Common myeloid progenitor, CD34-positive (primary cell): ENCODE measurements at regions of chr20 and their contacts with region 1.

Region 1: DNA sequence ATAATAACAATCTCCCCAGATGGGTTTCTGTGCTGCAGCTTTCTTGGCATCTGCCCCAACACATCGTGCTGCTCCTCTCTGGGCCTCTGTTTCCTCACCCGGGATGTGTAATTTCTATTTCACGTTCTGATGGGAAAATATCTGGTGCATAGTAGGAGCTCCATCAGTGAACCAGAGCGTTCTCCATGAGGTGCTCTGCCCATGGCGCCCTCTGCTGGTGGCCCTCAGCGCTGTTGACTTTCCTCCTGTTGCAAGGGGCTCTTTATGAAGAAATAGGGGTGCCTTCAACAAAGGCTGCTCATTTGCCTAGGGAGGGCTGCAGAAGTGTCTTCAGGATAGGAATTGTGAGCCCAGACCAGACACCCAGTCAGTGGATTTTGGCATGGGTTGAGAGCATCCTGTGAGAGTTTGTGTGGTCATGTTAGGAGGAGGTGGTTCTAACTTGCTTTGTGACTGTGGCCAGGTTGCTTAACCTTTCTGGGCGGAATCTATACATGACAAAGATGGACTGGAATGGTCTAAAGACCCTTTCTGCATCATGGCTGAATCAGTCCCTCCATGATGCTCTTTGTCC is 8.1 kb downstream of the SCRT2 start:
- DNase-seq: peak; percentile 55 to 72 (median 64)
- H3K4me3 ChIP-seq: no peak overlapping the region
- H3K27ac ChIP-seq: no peak overlapping the region
- H3K4me1 ChIP-seq: peaks cover 0 to 32% (median 26%) of the 10 kb centered on the region in 4 experiments
- H3K27me3 ChIP-seq: peaks cover 0 to 49% (median 14%) of the 10 kb centered on the region in 5 experiments

Region 2: GRCh38 chr20:561437-562231 is 105.8 kb before region 1 on chr20:
- CTCF ChIA-PET with region 1: interaction called, 15 read pairs
- POLR2A ChIA-PET with region 1: no interaction called
- DNase-seq: peak; percentile 71 to 86 (median 79)
- H3K4me3 ChIP-seq: no peak overlapping the region
- H3K27ac ChIP-seq: no peak overlapping the region
- H3K4me1 ChIP-seq: no peaks in the 10 kb centered on the region
- H3K27me3 ChIP-seq: peaks cover 0 to 2% (median 0%) of the 10 kb centered on the region in 5 experiments

Region 3: DNA sequence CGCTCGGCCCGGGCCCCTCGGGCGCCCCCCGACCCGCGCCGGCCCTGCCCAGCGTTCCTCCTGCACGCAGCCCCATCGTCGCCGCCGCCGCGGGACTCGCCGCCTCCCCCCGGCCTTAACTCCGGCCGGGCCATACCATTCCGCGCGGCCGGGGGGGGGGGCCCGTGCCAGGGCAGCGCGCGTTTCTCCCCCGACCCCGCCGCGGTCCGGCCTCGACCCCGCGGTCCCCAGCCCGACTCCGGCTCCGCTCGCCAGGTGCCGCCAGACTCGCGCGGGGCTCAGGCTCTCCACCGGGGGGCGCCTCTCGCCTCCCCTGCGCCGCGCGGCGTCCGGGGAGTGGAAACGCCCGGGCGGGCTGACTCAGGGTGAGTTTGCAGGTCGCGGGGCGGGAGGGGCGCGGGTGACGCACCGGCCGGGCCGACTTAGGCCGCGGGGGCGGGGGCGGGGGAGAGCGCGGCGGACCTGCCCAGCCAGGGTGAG is 14.3 kb before region 1 on chr20 and contains the start of gene SRXN1:
- CTCF ChIA-PET with region 1: interaction called, 146 read pairs
- POLR2A ChIA-PET with region 1: no interaction called
- DNase-seq: peak; percentile 93 to 97 (median 95)
- H3K4me3 ChIP-seq: peak within 1 kb of the TSS; percentile 43 to 76 (median 64)
- H3K27ac ChIP-seq: peak within 1 kb of the TSS in 1 of 2 experiments; percentile 66
- H3K4me1 ChIP-seq: peaks cover 9 to 27% (median 23%) of the 10 kb centered on the region in 4 experiments
- H3K27me3 ChIP-seq: no peaks in the 10 kb centered on the region

Region 4: GRCh38 chr20:707442-708110 is 40.1 kb after region 1 on chr20:
- CTCF ChIA-PET with region 1: interaction called, 11 read pairs
- POLR2A ChIA-PET with region 1: no interaction called
- DNase-seq: no peak
- H3K4me3 ChIP-seq: no peak overlapping the region
- H3K27ac ChIP-seq: no peak overlapping the region
- H3K4me1 ChIP-seq: peaks cover 0 to 10% (median 5%) of the 10 kb centered on the region in 4 experiments
- H3K27me3 ChIP-seq: peaks cover 0 to 31% (median 7%) of the 10 kb centered on the region in 5 experiments